Activated CD4-positive, alpha-beta memory T cell treated with anti-CD3 and anti-CD28 coated beads, Interleukin-2, amount 10 ng/mL, durations not matched to agents 7 days and 5 days (primary cell): ENCODE measurements at regions of chr21 and their contacts with region 1.

Region 1: DNA sequence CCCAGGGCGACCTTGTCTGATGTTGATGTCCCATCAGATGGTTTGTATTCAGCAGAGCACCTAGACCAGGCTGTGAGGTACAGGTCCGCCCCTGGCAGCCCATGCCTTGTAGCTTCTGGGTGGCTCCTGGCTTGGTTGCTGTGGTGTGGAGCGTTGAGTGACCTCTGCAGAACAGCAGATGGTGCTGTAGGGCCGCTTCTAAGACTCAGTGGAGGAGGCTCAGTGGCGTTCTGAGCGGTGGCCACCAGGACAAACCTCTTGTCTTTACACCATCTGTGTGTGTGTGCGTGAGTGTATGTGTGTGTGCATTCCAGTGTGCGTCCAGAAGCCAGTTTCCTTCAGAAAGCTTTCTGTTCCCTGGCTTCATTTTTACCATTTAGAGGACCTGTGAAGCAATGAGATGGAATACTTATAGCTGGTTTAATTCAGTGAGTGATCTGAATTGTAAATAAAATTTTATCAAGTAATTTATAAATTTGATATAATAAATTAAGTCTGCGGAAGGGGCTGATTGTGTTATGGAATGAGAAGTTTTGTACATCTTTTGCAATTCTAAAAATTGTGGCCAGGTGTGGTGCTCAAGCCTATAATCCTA is 66.1 kb downstream of the ADARB1 start:
- DNase-seq: peak; percentile 82
- H3K4me3 Mint-ChIP-seq: no peak overlapping the region
- H3K27ac Mint-ChIP-seq: no peak overlapping the region
- H3K4me1 Mint-ChIP-seq: peaks cover 16% of the 10 kb centered on the region
- H3K27me3 Mint-ChIP-seq: no peaks in the 10 kb centered on the region

Region 2: GRCh38 chr21:44949779-44950198 is 190.7 kb before region 1 on chr21:
- CTCF ChIA-PET with region 1: interaction called, 178 read pairs
- POLR2A ChIA-PET with region 1: no interaction called
- DNase-seq: peak; percentile 84
- H3K4me3 Mint-ChIP-seq: no peak overlapping the region
- H3K27ac Mint-ChIP-seq: no peak overlapping the region
- H3K4me1 Mint-ChIP-seq: peaks cover 8% of the 10 kb centered on the region
- H3K27me3 Mint-ChIP-seq: no peaks in the 10 kb centered on the region

Region 3: DNA sequence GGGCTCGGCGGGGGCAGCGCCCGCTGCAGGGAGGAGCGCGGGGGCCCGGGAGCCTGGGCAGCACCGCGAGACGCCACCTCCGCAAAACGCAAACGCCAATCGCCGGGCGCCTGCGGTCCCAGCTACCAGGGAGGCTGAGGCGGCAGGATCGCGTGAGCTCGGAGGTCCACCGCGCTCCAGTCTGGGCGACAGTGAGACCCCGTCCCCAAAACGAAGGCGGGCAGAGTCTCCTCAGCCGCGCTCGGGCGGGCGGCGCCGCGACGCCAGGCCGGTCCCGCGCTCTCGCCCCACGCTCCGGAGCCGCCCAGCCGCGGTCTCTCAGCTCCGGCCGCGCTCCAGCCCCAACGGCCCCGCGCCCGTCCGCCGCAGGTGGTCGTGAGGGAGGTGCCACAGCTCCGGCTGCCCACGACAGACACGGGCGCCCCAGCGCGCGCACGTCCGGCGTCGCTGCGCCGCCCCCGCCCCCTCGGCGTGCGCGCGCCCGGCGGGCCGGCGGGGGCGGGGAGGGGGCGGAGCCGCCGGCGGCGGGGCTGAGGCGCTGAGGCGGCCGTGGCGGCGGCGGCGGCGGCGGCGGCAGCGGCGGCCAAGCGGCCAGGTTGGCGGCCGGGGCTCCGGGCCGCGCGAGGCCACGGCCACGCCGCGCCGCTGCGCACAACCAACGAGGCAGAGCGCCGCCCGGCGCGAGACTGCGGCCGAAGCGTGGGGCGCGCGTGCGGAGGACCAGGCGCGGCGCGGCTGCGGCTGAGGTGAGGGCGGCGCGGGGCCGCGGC is 66.2 kb before region 1 on chr21 and contains the start of gene ADARB1:
- CTCF ChIA-PET with region 1: interaction called, 35 read pairs
- POLR2A ChIA-PET with region 1: interaction called, 3 read pairs
- DNase-seq: peak; percentile 65
- H3K4me3 Mint-ChIP-seq: peak within 1 kb of the TSS; percentile 90
- H3K27ac Mint-ChIP-seq: peak within 1 kb of the TSS; percentile 72
- H3K4me1 Mint-ChIP-seq: peaks cover 42% of the 10 kb centered on the region
- H3K27me3 Mint-ChIP-seq: no peaks in the 10 kb centered on the region
- total RNA-seq, gene ADARB1: 59.1 to 59.6 TPM

Region 4: DNA sequence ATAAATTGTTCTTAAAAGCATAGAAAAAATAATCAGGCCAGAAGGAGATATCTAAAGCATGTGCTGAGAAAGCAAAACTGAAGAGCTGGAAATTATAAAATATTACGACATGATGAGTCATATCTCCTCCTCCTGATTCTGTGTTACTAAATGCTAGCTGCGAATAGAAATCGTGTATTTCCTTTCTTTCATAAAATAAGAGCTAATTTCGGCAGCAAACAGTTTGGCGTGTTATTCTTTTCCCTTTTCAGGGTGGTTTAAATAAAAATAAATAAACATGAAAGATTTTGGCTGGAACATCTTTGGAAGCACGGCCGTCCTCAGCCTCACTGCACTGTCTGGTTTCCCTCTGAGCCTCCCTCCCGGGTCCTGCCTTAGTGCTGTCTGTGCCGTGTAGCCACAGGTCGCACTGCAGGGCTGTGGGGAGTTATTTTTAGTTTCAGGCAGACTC is 10.1 kb before region 1 on chr21:
- CTCF ChIA-PET with region 1: interaction called, 105 read pairs
- POLR2A ChIA-PET with region 1: interaction called, 3 read pairs
- DNase-seq: no peak
- H3K4me3 Mint-ChIP-seq: no peak overlapping the region
- H3K27ac Mint-ChIP-seq: no peak overlapping the region
- H3K4me1 Mint-ChIP-seq: peaks cover 21% of the 10 kb centered on the region
- H3K27me3 Mint-ChIP-seq: no peaks in the 10 kb centered on the region

Region 5: DNA sequence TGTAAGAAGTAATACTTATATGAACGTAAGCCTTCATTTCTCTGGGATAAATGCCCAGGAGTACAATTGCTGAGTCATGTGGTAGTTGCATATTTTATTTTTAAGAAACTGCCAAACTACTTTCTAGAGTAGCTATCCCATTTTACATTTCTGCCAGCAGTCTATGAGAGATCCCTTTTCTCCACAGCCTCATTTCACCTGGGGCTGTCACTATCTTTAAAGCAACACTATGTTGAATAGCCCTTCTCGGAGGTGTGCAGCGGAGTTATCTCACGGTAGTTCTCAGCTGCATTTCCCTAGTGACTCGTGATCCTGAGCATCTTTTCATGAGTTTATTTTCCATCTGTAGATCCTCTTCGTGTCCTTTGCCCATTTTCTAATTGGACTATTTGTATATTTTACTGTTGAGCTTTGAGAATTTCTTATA is 27.4 kb after region 1 on chr21:
- CTCF ChIA-PET with region 1: interaction called, 13 read pairs
- POLR2A ChIA-PET with region 1: no interaction called
- DNase-seq: no peak
- H3K4me3 Mint-ChIP-seq: no peak overlapping the region
- H3K27ac Mint-ChIP-seq: no peak overlapping the region
- H3K4me1 Mint-ChIP-seq: peaks cover 36% of the 10 kb centered on the region
- H3K27me3 Mint-ChIP-seq: no peaks in the 10 kb centered on the region

Region 6: DNA sequence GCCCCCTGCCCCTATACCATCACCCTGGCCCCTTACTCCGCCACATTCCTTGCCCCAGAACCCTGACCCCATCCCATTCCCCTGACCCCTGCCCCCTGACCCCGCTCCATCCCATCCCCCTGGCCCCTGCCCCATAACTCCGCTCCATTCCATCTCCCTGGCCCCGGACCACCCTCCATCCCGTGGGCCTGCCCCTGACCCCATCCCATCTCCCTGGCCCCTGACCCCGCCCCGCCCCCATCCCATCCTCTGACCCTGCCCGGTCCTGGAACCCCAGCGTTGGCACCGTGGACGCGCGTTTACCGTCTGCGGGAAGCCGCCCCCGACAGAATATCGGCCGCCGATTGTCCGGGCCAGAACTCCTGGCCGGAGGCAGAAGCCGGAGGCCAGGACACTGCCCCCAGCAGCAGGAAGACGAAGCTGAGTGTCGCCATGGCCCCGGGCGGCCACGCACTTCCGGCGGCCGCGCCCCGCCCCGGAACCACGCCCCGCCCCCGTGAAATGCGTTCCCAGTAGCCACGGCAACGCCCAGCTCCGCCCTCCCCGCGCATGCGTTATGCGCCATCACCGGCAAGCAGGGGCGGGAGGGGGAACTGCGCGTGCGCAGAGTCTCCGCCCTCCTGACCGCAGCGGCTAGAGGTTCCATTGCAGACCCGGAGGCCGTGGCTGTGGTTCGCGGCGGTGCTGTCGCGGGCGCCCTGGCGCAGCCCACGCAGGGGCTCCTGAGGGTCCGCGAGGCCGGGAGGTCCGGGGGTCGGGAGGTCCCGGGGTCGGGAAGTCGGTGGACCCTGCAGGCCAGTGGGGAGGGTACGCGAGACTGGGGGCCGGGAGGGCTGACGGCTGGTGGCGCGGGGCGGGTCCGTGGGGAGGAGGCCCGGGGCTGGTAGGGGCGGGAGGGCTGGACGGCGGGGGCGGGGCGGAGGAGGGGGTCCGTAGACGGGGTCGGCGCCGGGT is 147.3 kb after region 1 on chr21 and contains the start of gene POFUT2:
- CTCF ChIA-PET with region 1: interaction called, 37 read pairs
- POLR2A ChIA-PET with region 1: interaction called, 3 read pairs
- DNase-seq: peak; percentile 99
- H3K4me3 Mint-ChIP-seq: peak within 1 kb of the TSS; percentile 82
- H3K27ac Mint-ChIP-seq: peak within 1 kb of the TSS; percentile 75
- H3K4me1 Mint-ChIP-seq: peaks cover 46% of the 10 kb centered on the region
- H3K27me3 Mint-ChIP-seq: no peaks in the 10 kb centered on the region
- total RNA-seq, gene POFUT2: 23.5 to 25.1 TPM